ENCODE measurements at regions of chr22 and their contacts with region 1.

Region 1: GRCh38 chr22:40044102-40044869 is 49.5 kb downstream of the FAM83F start:
- DNase-seq: peak; percentile 96
- H3K4me3 ChIP-seq: peak overlapping the region; percentile 80
- H3K27me3 ChIP-seq: peaks cover 6% of the 10 kb centered on the region
- CTCF ChIP-seq: no peak

Region 2: GRCh38 chr22:40030758-40031095 is 13.6 kb before region 1 on chr22:
- CTCF ChIA-PET with region 1: no interaction called
- POLR2A ChIA-PET with region 1: no interaction called
- DNase-seq: no peak
- H3K4me3 ChIP-seq: no peak overlapping the region
- H3K27me3 ChIP-seq: peaks cover 7% of the 10 kb centered on the region; the same call in 1 of the 2 replicates
- CTCF ChIP-seq: no peak

Region 3: DNA sequence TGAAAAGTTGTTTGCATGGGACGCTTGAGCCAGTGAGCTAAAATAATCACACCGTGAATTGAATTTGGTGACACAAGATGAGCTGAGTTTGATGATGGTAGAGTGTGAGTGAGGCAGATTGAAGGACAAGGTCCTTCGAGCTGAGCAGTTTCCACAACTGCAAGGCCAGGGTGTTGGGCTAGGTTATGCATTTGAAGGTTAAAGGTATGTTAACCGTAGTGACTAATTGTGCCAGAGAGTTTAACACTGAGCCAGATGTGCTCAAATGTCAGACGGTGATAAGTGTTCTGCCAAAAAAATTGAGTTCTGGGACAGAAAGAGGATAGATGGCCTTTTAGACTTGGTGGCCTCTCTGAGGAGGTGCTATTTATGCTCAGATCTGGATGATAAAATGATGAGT is 40.0 kb after region 1 on chr22:
- CTCF ChIA-PET with region 1: no interaction called
- POLR2A ChIA-PET with region 1: no interaction called
- DNase-seq: no peak
- H3K4me3 ChIP-seq: no peak overlapping the region
- H3K27me3 ChIP-seq: peaks cover 2% of the 10 kb centered on the region
- CTCF ChIP-seq: no peak

Region 4: GRCh38 chr22:40346178-40347118 is 302.2 kb after region 1 on chr22 and contains the start of gene ADSL:
- CTCF ChIA-PET with region 1: interaction called, 23 read pairs
- POLR2A ChIA-PET with region 1: no interaction called
- DNase-seq: no peak
- H3K4me3 ChIP-seq: peak within 1 kb of the TSS; percentile 85
- H3K27me3 ChIP-seq: no peaks in the 10 kb centered on the region
- CTCF ChIP-seq: 0 out of 2 replicates have a peak, but pooled peaks have one; percentile 29
- polyA plus RNA-seq, gene ADSL: 115 and 119 TPM in 2 replicates